IMR-90 (cell line): ENCODE measurements at regions of chr10 and their contacts with region 1.

Region 1: DNA sequence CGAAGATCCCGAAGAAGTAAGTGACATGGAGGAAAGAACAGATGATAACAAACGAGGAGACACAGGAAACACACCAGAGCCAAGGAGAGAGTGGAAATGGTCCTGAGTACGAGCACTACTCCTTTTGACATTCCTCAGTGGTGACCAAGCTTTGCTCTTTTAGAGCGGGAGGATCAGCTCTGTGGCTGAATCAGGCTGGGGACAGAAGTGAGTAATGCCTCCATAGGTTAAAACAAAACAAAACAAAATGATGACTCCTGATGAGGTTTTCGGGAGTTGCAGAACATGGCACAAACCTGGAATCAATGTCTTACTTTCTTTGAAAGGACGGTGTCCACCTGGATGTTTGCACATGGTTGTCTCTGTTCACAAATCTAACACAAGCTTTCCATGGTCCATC is 30.3 kb upstream of the TCF7L2 start:
- DNase-seq: peak; percentile 87
- ATAC-seq: peak; percentile 92
- H3K4me3 ChIP-seq: no peak overlapping the region
- H3K27ac ChIP-seq: no peak overlapping the region; the same call in 1 of the 2 replicates
- H3K4me1 ChIP-seq: peaks cover 9% of the 10 kb centered on the region
- H3K27me3 ChIP-seq: no peaks in the 10 kb centered on the region
- CTCF ChIP-seq: no peak
- POLR2A ChIP-seq: no peak
- RAD21 ChIP-seq: peak; percentile 20; the same call in 1 of the 2 replicates

Region 2: DNA sequence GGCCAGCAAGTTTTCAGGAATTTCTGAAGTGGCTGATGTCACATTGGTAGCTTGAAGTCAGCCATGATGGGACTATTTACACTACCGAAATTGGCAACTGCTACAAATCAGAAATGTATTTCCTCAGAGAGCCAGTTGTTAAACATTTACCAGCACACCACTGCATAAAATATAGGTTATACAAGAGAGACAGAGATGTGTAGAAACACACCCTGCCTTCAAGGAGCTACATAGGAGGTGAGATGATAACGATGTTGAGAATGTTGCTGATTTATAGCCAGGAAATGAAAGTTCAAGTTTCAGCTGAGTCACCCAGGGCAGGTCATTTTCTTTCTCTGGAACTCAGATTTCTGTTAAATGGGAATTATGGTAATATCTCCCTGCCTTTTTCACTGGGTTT is 15.7 kb before region 1 on chr10:
- CTCF ChIA-PET with region 1: interaction called, 3 read pairs
- POLR2A ChIA-PET with region 1: interaction called, 16 read pairs
- dilution Hi-C with region 1: no loop called
- in situ Hi-C with region 1: no loop called
- intact Hi-C with region 1: no loop called
- DNase-seq: peak; percentile 60
- ATAC-seq: peak; percentile 54
- H3K4me3 ChIP-seq: no peak overlapping the region
- H3K27ac ChIP-seq: no peak overlapping the region
- H3K4me1 ChIP-seq: no peaks in the 10 kb centered on the region
- H3K27me3 ChIP-seq: no peaks in the 10 kb centered on the region
- CTCF ChIP-seq: no peak
- POLR2A ChIP-seq: no peak
- RAD21 ChIP-seq: no peak